ENCODE measurements at regions of chr1 and their contacts with region 1.

Region 1: DNA sequence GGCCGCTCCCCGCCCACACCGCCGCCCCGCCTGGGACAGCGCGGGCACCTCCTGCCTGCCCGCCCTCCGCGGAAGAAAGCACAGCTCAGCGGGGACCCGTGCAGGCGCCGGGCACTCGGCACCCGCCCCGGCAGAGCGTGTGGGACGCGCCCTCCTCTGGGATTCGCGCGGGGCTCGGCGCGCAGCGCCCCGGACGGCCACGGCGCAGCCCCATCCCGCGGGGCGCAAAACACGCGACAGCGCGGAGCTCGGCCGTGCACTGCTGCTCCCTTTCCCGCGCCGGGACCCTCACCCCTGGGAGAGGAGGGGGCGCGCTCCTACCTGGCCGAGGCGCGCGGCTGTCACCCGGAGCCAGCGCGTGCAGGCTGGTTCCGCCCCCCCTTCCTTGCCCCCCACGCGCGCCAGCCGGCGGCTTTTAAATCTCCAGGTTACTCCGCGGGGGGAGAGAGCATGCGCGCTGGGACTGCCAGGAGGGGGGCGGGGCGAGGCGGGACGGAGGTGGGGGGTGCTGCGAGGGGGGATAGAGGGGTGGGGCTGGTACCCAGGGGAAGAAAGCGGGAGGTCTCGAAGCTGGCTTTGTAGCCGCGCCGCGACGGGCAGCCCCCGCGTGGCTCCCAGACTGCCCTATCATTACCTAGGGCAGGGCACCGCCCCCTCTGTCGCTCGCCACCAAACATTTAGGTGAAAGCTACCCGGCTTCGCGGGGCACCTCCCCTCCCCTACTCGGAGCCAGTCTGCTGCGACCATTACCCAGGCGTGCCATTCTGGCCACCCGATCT is at the start of gene SLC45A3:
- DNase-seq: no peak
- H3K4me3 ChIP-seq: peak within 1 kb of the TSS; percentile 63 to 93 (median 72)
- H3K27ac ChIP-seq: peak within 1 kb of the TSS; percentile 48; the same call in 1 of the 2 replicates
- H3K4me1 ChIP-seq: peaks cover 4 to 30% (median 15%) of the 10 kb centered on the region in 4 experiments
- H3K27me3 ChIP-seq: peaks cover 0 to 11% (median 2%) of the 10 kb centered on the region in 4 experiments; a peak in 2 of 7 replicates
- CTCF ChIP-seq: no peak
- EP300 ChIP-seq: no peak
- POLR2A ChIP-seq: peak in 1 of 2 experiments; percentile 31; a peak in 1 of 3 replicates
- RAD21 ChIP-seq: no peak
- total RNA-seq, gene SLC45A3: 12.5 and 13.0 TPM in 2 replicates

Region 2: GRCh38 chr1:205631727-205632373 is 48.4 kb before region 1 on chr1 and contains the start of gene ELK4:
- CTCF ChIA-PET with region 1: interaction called, 4 read pairs
- POLR2A ChIA-PET with region 1: interaction called, 12 read pairs
- DNase-seq: peak; percentile 91 to 99
- H3K4me3 ChIP-seq: peak within 1 kb of the TSS; percentile 72 to 90 (median 78)
- H3K27ac ChIP-seq: peak within 1 kb of the TSS; percentile 93
- H3K4me1 ChIP-seq: no peaks in the 10 kb centered on the region; a peak in 2 of 7 replicates
- H3K27me3 ChIP-seq: no peaks in the 10 kb centered on the region
- CTCF ChIP-seq: peak; percentile 64 to 71 (median 65)
- EP300 ChIP-seq: peak in 1 of 2 experiments; percentile 14; a peak in 1 of 3 replicates
- POLR2A ChIP-seq: peak; percentile 83 to 95
- RAD21 ChIP-seq: peak; percentile 74 to 75
- total RNA-seq, gene ELK4: 23.3 and 26.3 TPM in 2 replicates

Region 3: DNA sequence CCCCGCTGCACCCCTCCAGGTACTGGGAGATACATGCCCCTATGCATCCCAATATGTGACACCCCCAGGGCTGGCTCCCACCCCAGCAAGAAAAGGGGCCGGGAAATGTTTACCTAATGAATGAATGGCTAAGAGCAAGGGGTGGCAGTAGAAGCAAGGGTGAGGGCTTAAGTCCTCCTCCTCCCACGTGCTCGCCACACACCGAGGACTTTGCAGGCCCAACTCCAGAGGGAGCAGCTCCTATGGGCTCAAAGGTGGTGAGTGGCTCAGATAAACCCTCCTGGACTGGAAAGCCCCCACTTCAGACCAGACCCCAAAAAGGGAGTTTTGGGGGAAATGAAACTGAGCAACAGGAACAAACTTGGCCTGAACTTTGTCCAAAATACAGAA is 11.3 kb before region 1 on chr1:
- CTCF ChIA-PET with region 1: interaction called, 43 read pairs
- POLR2A ChIA-PET with region 1: interaction called, 49 read pairs
- DNase-seq: no peak
- H3K4me3 ChIP-seq: no peak overlapping the region
- H3K27ac ChIP-seq: no peak overlapping the region
- H3K4me1 ChIP-seq: peaks cover 17 to 54% (median 44%) of the 10 kb centered on the region in 4 experiments
- H3K27me3 ChIP-seq: no peaks in the 10 kb centered on the region
- CTCF ChIP-seq: 0 out of 4 replicates have a peak, but pooled peaks of 1 of the 3 experiments have one; percentile 9
- EP300 ChIP-seq: no peak
- POLR2A ChIP-seq: no peak
- RAD21 ChIP-seq: peak in 1 of 2 experiments; percentile 12; a peak in 1 of 4 replicates

Region 4: GRCh38 chr1:205693421-205693991 is 13.2 kb after region 1 on chr1:
- CTCF ChIA-PET with region 1: interaction called, 21 read pairs
- POLR2A ChIA-PET with region 1: interaction called, 6 read pairs
- DNase-seq: no peak
- H3K4me3 ChIP-seq: no peak overlapping the region
- H3K27ac ChIP-seq: no peak overlapping the region
- H3K4me1 ChIP-seq: peaks cover 4 to 8% (median 5%) of the 10 kb centered on the region in 4 experiments; a peak in 6 of 7 replicates
- H3K27me3 ChIP-seq: no peaks in the 10 kb centered on the region
- CTCF ChIP-seq: no peak
- EP300 ChIP-seq: no peak
- POLR2A ChIP-seq: no peak
- RAD21 ChIP-seq: no peak

Region 5: DNA sequence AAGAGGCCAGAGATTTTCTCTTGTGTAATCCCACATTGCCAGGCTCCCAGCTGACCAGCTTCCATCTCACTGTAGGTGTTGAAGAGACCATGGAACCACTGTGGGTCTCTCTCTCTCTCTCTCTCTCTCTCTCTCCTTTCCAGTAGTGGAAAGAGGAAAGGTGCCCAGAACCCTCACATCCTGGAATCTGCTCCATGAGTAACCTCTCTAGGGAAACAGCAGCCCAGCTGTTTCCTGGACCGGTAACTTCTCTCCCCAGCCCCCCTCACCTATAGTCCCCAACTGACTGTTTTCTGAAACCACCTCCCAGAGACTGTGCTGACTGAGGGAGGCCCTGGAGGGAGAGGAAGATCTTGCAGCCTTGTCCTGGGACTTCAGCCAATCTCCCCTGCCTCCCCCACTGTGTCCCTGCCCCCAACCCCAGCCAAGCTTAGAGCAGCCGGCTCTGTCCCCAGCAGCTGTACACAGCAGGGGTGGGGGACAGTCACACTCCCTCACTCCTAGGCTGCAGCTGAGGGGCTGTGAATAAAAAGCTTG is 20.7 kb after region 1 on chr1:
- CTCF ChIA-PET with region 1: interaction called, 154 read pairs
- POLR2A ChIA-PET with region 1: interaction called, 12 read pairs
- DNase-seq: no peak
- H3K4me3 ChIP-seq: peak overlapping the region in 1 of 4 experiments; percentile 6; a peak in 1 of 8 replicates
- H3K27ac ChIP-seq: no peak overlapping the region
- H3K4me1 ChIP-seq: peaks cover 0 to 7% (median 5%) of the 10 kb centered on the region in 4 experiments; a peak in 4 of 7 replicates
- H3K27me3 ChIP-seq: no peaks in the 10 kb centered on the region
- CTCF ChIP-seq: no peak
- EP300 ChIP-seq: no peak
- POLR2A ChIP-seq: no peak
- RAD21 ChIP-seq: 0 out of 4 replicates have a peak, but pooled peaks of 1 of the 2 experiments have one; percentile 1

Region 6: GRCh38 chr1:205783904-205784303 is 103.6 kb after region 1 on chr1:
- CTCF ChIA-PET with region 1: no interaction called
- POLR2A ChIA-PET with region 1: no interaction called
- DNase-seq: no peak
- H3K4me3 ChIP-seq: no peak overlapping the region
- H3K27ac ChIP-seq: no peak overlapping the region
- H3K4me1 ChIP-seq: no peaks in the 10 kb centered on the region
- H3K27me3 ChIP-seq: no peaks in the 10 kb centered on the region
- CTCF ChIP-seq: no peak
- EP300 ChIP-seq: no peak
- POLR2A ChIP-seq: no peak
- RAD21 ChIP-seq: no peak

Measured in H1 (cell line).